ENCODE measurements at regions of chr3 and their contacts with region 1.

Region 1: GRCh38 chr3:192816351-192816750 is 89.0 kb upstream of the FGF12 start:
- DNase-seq: peak; percentile 40
- H3K4me3 ChIP-seq: no peak overlapping the region
- H3K27ac ChIP-seq: no peak overlapping the region
- H3K4me1 ChIP-seq: no peaks in the 10 kb centered on the region
- CTCF ChIP-seq: peak; percentile 89

Region 2: DNA sequence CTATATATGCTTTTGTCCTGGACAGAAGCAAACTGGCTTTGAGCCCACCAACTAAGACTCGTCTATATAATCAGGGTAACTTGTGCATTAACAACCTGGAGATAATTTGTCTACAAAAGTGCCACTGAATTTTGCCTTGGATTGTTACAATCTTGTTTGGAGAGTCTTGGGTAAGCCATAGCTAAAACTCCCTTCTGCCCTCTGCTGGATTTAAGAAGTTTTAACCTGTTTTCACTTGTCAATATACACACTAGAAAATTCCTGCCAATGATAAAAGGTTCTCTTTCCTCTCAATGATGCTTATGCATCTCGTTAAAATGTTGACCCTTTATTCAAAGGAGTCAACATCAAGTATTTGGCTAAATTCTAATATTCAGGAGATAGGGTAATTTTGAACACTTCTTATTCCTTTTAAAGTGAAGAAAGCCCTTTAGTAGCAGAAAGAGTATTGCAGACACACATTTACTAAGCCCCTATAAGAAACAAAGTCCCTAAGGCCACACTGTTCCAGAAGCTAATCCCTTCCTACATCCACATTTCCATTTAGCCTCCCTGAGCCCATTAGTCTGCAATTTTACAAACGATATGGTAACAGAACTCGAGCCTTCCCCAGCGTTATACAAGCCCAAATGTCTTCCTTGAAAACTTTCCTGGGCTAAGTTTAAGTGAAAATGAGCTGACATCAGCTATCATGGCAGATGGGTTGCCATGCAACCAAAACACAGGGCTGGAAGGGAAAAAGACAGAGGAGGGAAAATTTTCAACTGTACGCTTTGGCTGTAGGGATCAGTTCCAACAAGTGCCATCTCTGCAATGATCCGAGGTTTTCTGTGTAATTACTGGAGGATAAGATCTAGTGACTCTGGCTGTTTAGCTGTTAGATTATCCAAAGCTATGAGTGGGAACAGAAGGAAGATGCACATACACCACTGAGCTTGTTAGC is 13.1 kb before region 1 on chr3:
- CTCF ChIA-PET with region 1: no interaction called
- POLR2A ChIA-PET with region 1: no interaction called
- intact Hi-C with region 1: no loop called
- DNase-seq: peak; percentile 63
- H3K4me3 ChIP-seq: no peak overlapping the region
- H3K27ac ChIP-seq: no peak overlapping the region
- H3K4me1 ChIP-seq: no peaks in the 10 kb centered on the region
- CTCF ChIP-seq: peak; percentile 82

Region 3: GRCh38 chr3:193040836-193041672 is 224.7 kb after region 1 on chr3:
- CTCF ChIA-PET with region 1: no interaction called
- POLR2A ChIA-PET with region 1: no interaction called
- intact Hi-C with region 1: loop called (anchors 1 kb)
- DNase-seq: peak; percentile 56
- H3K4me3 ChIP-seq: no peak overlapping the region
- H3K27ac ChIP-seq: no peak overlapping the region
- H3K4me1 ChIP-seq: no peaks in the 10 kb centered on the region
- CTCF ChIP-seq: peak; percentile 78